PC-3 (cell line): ENCODE measurements at regions of chr13 and their contacts with region 1.

Region 1: GRCh38 chr13:48828962-48829421 is 146.7 kb upstream of the FNDC3A start:
- DNase-seq: peak; percentile 64
- ATAC-seq: peak; percentile 59
- H3K4me3 ChIP-seq: no peak overlapping the region
- H3K27ac ChIP-seq: peak overlapping the region; percentile 58
- H3K4me1 ChIP-seq: peaks cover 30% of the 10 kb centered on the region
- H3K27me3 ChIP-seq: no peaks in the 10 kb centered on the region
- CTCF ChIP-seq: no peak

Region 2: GRCh38 chr13:48885027-48885395 is 56.0 kb after region 1 on chr13:
- CTCF ChIA-PET with region 1: no interaction called
- POLR2A ChIA-PET with region 1: no interaction called
- intact Hi-C with region 1: loop called (anchors 2 kb)
- DNase-seq: peak; percentile 31
- ATAC-seq: no peak; the same call in 1 of the 2 replicates
- H3K4me3 ChIP-seq: no peak overlapping the region
- H3K27ac ChIP-seq: peak overlapping the region; percentile 94
- H3K4me1 ChIP-seq: peaks cover 18% of the 10 kb centered on the region
- H3K27me3 ChIP-seq: no peaks in the 10 kb centered on the region
- CTCF ChIP-seq: no peak